ENCODE measurements at regions of chr5 and their contacts with region 1.

Region 1: DNA sequence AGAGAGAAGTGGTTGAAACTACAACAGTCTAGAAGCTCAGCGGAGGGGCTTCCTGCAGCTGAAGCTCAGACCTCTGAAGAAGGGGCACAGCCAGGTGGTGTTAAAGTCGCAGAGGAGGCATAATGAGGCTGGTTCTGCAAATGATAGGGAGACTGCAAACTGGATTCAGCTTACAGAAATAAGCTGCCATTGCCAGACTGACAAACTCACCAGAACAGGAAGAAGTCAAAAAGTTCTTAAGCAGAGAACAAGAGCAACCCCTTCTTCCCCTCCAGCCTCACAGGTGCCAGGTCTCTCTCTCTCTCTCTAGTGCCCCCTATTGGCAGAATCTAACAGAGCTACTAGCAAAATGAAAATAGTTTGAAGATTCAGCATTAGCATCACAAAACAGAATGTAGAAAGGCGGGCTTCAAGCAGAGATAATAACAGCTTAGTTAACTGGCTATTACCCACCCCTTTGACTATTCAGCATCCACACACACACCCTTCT is 76.7 kb downstream of the GRAMD2B start:
- DNase-seq: peak in 4 of 5 donors; percentile 60 to 64 (median 62)
- H3K4me3 ChIP-seq: no peak overlapping the region
- H3K4me3 Mint-ChIP-seq: no peak overlapping the region
- H3K27ac ChIP-seq: no peak overlapping the region
- H3K27ac Mint-ChIP-seq: peak overlapping the region in 6 of 7 donors; percentile 17 to 84 (median 50)
- H3K4me1 ChIP-seq: peaks cover 7% of the 10 kb centered on the region
- H3K4me1 Mint-ChIP-seq: peaks cover 14 to 22% (median 16%) of the 10 kb centered on the region in 4 donors
- H3K27me3 ChIP-seq: no peaks in the 10 kb centered on the region
- H3K27me3 Mint-ChIP-seq: no peaks in the 10 kb centered on the region

Region 2: DNA sequence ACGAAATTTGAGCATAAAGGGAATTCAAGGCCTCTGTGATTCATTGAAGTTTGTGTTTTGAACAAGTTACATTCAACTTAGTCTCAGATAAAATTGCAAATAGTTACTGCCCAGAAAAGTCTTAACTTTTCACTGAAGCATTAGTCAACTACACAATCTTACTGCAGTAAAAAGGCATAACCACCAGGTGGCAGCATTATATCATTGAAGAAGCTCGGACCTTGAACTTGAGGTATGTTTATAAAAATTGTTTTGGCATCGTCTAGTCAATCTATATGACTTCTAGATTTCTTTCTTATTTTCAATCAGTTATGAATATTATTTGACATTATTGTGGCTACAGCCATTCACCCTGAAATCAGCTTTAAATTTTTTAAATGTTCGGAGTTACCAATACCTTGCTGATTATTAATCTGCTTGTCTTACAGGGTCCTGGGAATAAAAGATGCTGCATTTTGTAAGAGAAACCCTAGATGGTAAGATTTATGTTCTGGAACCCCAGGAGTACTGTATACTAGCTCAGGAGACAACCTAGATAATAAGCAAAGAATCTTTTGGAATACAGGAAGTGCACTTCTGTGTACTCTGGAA is 160.6 kb before region 1 on chr5:
- CTCF ChIA-PET with region 1: interaction called, 37 read pairs
- POLR2A ChIA-PET with region 1: no interaction called
- intact Hi-C with region 1: loop called (anchors 1 kb)
- DNase-seq: peak; percentile 56 to 66 (median 58)
- H3K4me3 ChIP-seq: no peak overlapping the region
- H3K4me3 Mint-ChIP-seq: no peak overlapping the region
- H3K27ac ChIP-seq: no peak overlapping the region
- H3K27ac Mint-ChIP-seq: no peak overlapping the region
- H3K4me1 ChIP-seq: no peaks in the 10 kb centered on the region
- H3K4me1 Mint-ChIP-seq: no peaks in the 10 kb centered on the region
- H3K27me3 ChIP-seq: no peaks in the 10 kb centered on the region
- H3K27me3 Mint-ChIP-seq: peaks cover 9 to 21% of the 10 kb centered on the region in 2 donors

Region 3: GRCh38 chr5:126354012-126354857 is 145.7 kb before region 1 on chr5:
- CTCF ChIA-PET with region 1: interaction called, 69 read pairs
- POLR2A ChIA-PET with region 1: no interaction called
- intact Hi-C with region 1: loop called (anchors 1 kb)
- DNase-seq: peak in 4 of 5 donors; percentile 48 to 51 (median 50)
- H3K4me3 ChIP-seq: no peak overlapping the region
- H3K4me3 Mint-ChIP-seq: peak overlapping the region in 6 of 8 donors; percentile 27 to 68 (median 64)
- H3K27ac ChIP-seq: no peak overlapping the region
- H3K27ac Mint-ChIP-seq: peak overlapping the region in 4 of 7 donors; percentile 7 to 65 (median 50)
- H3K4me1 ChIP-seq: peaks cover 4% of the 10 kb centered on the region
- H3K4me1 Mint-ChIP-seq: peaks cover 4 to 12% (median 5%) of the 10 kb centered on the region in 4 donors
- H3K27me3 ChIP-seq: no peaks in the 10 kb centered on the region
- H3K27me3 Mint-ChIP-seq: peaks cover 7 to 8% of the 10 kb centered on the region in 2 donors

Region 4: DNA sequence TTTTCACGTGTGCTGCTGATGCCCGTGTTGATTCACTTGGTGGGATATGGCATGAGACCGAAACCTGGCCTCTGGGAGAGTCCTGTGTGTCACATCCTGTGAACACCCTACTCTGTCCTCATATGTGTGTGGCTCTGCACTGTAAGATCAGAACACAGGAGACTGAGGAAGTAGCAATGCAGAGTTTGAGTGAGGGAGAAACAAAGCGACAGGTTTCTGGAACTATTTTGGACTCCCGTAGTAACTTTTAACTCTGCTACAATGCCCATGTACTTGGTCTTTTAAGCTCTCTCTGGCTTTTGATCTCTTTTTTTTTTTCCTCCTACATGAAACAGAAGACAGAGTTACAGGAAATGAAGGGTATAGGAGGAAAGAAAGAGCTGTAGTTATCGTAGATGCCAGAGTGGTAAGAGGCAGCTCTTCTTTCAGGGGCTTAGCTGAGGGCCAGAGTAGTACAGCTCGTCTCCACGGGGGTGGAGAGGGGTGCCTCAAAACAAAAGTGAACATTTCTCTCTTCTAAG is 50.1 kb before region 1 on chr5:
- CTCF ChIA-PET with region 1: interaction called, 20 read pairs
- POLR2A ChIA-PET with region 1: no interaction called
- intact Hi-C with region 1: loop called (anchors 5 kb)
- DNase-seq: peak; percentile 50 to 72 (median 63)
- H3K4me3 ChIP-seq: peak overlapping the region; percentile 32 to 44
- H3K4me3 Mint-ChIP-seq: peak overlapping the region; percentile 83 to 94 (median 90)
- H3K27ac ChIP-seq: peak overlapping the region; percentile 87
- H3K27ac Mint-ChIP-seq: peak overlapping the region; percentile 95 to 100 (median 98)
- H3K4me1 ChIP-seq: peaks cover 57% of the 10 kb centered on the region
- H3K4me1 Mint-ChIP-seq: peaks cover 45 to 64% (median 55%) of the 10 kb centered on the region in 4 donors
- H3K27me3 ChIP-seq: no peaks in the 10 kb centered on the region
- H3K27me3 Mint-ChIP-seq: no peaks in the 10 kb centered on the region

Region 5: DNA sequence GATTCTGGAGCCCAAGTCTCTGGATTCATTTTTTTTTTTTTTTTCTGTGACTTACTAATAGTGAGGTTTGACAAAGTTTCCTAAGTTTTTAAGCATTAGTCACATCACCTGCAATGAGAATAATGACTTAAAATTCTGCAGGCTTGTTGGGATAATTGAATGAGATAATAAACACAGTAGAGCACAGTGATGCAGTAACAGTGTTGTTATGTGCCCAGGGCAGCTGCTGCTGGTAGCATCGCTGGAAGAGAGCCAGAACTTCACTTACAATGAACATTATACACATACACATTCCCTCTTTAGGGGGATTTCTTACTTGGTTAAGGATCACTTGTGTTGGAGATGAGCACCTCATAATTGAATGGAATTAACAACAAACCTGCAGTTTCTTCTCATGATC is 16.2 kb after region 1 on chr5:
- CTCF ChIA-PET with region 1: interaction called, 20 read pairs
- POLR2A ChIA-PET with region 1: no interaction called
- intact Hi-C with region 1: no loop called
- DNase-seq: no peak
- H3K4me3 ChIP-seq: no peak overlapping the region
- H3K4me3 Mint-ChIP-seq: no peak overlapping the region
- H3K27ac ChIP-seq: no peak overlapping the region
- H3K27ac Mint-ChIP-seq: peak overlapping the region in 1 of 7 donors; percentile 44
- H3K4me1 ChIP-seq: no peaks in the 10 kb centered on the region
- H3K4me1 Mint-ChIP-seq: peaks cover 0 to 3% (median 0%) of the 10 kb centered on the region in 4 donors
- H3K27me3 ChIP-seq: no peaks in the 10 kb centered on the region
- H3K27me3 Mint-ChIP-seq: no peaks in the 10 kb centered on the region

Region 6: GRCh38 chr5:126544087-126544740 is 44.3 kb after region 1 on chr5:
- CTCF ChIA-PET with region 1: interaction called, 34 read pairs
- POLR2A ChIA-PET with region 1: no interaction called
- intact Hi-C with region 1: loop called (anchors 1 kb)
- DNase-seq: peak in 4 of 5 donors; percentile 7 to 22 (median 20)
- H3K4me3 ChIP-seq: no peak overlapping the region
- H3K4me3 Mint-ChIP-seq: no peak overlapping the region
- H3K27ac ChIP-seq: no peak overlapping the region
- H3K27ac Mint-ChIP-seq: no peak overlapping the region
- H3K4me1 ChIP-seq: no peaks in the 10 kb centered on the region
- H3K4me1 Mint-ChIP-seq: no peaks in the 10 kb centered on the region
- H3K27me3 ChIP-seq: no peaks in the 10 kb centered on the region
- H3K27me3 Mint-ChIP-seq: peaks cover 1 to 3% of the 10 kb centered on the region in 2 donors

Region 7: DNA sequence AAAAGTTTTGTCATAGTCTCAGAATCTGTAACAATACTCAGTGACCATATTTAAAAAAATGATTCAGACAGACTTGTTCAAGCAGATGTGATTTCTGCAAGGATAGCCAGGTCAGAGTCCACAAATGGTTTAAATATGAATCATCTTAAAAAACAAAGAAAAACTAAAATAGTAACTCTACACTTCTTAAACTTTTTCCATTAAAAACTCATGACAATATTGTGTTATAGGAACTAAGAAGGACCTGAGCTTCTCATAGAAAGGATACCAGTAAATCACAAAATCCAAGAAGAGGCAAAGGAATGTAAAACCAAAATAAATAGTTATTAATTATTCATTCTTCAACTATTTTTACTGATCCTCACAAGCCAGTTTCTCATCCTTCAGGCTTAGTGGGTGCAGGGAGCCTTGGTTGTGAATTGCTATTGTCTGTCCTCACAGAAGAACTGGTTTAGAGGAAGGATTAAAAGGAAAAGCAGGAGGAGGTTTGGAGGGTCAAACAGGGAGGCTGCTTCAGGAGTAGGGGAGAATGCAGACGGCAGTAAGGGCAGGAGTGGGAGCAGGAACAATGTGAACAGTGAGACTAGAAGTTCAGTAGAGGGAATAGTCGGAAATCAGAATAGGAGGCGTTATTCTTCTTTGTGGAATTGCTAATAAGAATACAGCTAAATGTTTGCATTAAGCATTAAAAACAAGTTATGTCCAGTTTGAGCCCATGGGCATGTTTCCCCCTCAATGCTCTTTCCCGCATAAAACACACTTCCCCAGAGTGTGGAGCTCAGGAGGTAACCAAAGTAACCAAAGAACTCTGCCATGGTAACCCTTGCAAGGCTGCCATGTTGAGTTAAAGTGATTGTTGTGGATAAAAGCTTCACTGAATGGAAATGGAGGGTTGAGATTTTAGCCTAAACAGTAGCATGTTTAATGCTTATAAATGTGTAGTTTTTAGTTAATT is 1314.0 kb after region 1 on chr5:
- CTCF ChIA-PET with region 1: no interaction called
- POLR2A ChIA-PET with region 1: no interaction called
- intact Hi-C with region 1: no loop called
- DNase-seq: no peak
- H3K4me3 ChIP-seq: no peak overlapping the region
- H3K4me3 Mint-ChIP-seq: no peak overlapping the region
- H3K27ac ChIP-seq: no peak overlapping the region
- H3K27ac Mint-ChIP-seq: no peak overlapping the region
- H3K4me1 ChIP-seq: no peaks in the 10 kb centered on the region
- H3K4me1 Mint-ChIP-seq: no peaks in the 10 kb centered on the region
- H3K27me3 ChIP-seq: no peaks in the 10 kb centered on the region
- H3K27me3 Mint-ChIP-seq: peaks cover 8% of the 10 kb centered on the region in 2 donors